HepG2 (cell line): ENCODE measurements at regions of chr2 and their contacts with region 1.

Region 1: DNA sequence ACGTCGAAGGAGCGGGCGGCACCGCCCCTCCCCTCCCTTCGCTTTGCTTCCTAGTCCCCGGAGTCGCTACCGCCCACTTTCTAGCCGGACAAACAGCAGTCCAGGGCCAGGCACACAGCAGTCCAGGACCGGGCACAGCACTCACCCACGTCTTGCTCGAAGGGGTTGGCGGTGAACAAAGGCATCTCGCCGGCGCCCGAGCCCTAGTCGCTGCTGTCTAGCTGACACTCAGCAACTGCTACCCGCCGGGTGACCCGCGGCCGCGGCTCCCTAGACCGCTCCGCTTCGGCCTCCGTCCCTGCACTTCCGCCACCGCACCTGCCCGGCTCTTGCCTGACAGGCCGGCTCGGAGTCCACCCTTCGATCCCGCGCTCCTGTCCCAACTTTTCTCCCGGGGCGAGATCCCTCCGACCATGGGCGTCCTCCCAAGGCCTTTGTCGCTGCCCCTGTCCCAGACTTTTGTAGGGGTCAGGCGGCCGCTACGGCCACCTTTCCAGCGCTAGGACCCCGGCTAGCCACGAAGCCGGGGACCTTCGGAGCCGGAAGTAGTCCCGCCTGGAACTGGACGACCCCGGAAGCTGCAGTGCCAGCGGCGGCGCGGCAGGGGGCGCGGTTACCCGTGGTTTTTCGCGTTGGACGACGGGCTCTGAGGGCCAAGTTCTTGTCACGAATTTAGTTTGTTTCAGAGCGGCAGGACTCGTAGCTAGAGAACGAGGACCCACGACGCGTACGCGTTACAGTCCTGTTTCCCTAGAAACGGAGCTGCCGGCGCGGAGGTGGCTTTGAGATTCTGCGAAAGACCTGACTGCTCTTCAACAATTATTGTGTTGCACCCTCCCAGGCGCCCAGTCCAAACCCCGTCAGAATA is at the start of gene STAM2:
- DNase-seq: peak; percentile 89
- ATAC-seq: peak; percentile 92
- H3K4me3 ChIP-seq: peak within 1 kb of the TSS; percentile 90 to 99 (median 91)
- H3K27ac ChIP-seq: peak within 1 kb of the TSS; percentile 94
- H3K4me1 ChIP-seq: peaks cover 30% of the 10 kb centered on the region
- H3K27me3 ChIP-seq: no peaks in the 10 kb centered on the region; a peak in 1 of 5 replicates
- CTCF ChIP-seq: peak; percentile 99
- EP300 ChIP-seq: peak; percentile 3 to 38; a peak in 1 of 4 replicates
- POLR2A ChIP-seq: peak; percentile 93 to 96
- RAD21 ChIP-seq: peak; percentile 98
- total RNA-seq, gene STAM2: 24.1 and 29.2 TPM in 2 replicates

Region 2: DNA sequence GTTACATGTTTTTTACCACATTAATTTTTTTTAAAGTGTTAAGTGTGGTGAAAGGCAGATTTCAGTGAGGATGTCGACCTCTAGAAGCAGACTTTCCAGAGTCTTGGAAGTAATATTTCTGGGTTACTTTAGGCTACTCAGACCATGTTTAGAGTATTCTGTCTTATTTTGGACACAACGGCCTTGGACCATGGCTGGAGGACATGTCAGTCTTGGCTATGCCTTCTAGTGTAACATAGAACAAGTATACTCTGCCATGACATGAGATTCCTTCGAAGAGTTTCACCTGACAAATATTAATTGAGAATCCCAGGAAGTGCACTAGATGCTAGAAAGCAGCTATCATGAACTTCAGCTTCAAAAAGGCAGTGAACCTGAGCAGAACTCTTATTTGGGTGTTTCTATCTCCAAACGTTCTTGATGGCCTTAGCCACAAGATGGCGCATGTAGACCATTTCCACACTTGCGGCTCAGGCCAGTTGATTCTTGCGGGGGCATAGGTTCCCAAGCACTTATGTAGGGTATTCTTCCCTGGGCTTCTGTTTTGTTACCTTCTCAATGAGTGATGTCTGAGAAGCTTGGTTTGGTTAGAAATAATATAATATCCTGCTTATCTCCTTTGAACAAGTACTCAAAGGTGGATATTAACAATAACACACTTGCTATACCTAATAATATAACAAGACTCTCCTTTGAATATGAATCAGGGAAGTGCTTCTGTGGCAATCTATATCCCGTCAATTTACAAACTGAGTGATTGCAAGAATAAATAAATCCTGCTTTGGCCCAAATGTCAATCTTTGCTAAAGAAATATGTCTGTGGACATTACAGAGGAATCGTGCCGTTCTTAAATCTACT is 138.9 kb before region 1 on chr2:
- CTCF ChIA-PET with region 1: no interaction called
- POLR2A ChIA-PET with region 1: interaction called, 4 read pairs
- in situ Hi-C with region 1: loop called (anchors 10 kb)
- intact Hi-C with region 1: loop called (anchors 1 kb)
- DNase-seq: peak; percentile 73
- ATAC-seq: peak; percentile 83
- H3K4me3 ChIP-seq: no peak overlapping the region
- H3K27ac ChIP-seq: no peak overlapping the region
- H3K4me1 ChIP-seq: no peaks in the 10 kb centered on the region
- H3K27me3 ChIP-seq: peaks cover 2 to 30% of the 10 kb centered on the region in 2 experiments; a peak in 2 of 5 replicates
- CTCF ChIP-seq: peak; percentile 93
- EP300 ChIP-seq: no peak
- POLR2A ChIP-seq: no peak
- RAD21 ChIP-seq: peak; percentile 77

Region 3: GRCh38 chr2:152155209-152155608 is 20.5 kb before region 1 on chr2:
- CTCF ChIA-PET with region 1: no interaction called
- POLR2A ChIA-PET with region 1: no interaction called
- in situ Hi-C with region 1: no loop called
- intact Hi-C with region 1: no loop called
- DNase-seq: peak; percentile 58
- ATAC-seq: peak; percentile 97
- H3K4me3 ChIP-seq: no peak overlapping the region
- H3K27ac ChIP-seq: no peak overlapping the region
- H3K4me1 ChIP-seq: peaks cover 11% of the 10 kb centered on the region
- H3K27me3 ChIP-seq: no peaks in the 10 kb centered on the region
- CTCF ChIP-seq: peak; percentile 54
- EP300 ChIP-seq: no peak
- POLR2A ChIP-seq: no peak
- RAD21 ChIP-seq: no peak

Region 4: DNA sequence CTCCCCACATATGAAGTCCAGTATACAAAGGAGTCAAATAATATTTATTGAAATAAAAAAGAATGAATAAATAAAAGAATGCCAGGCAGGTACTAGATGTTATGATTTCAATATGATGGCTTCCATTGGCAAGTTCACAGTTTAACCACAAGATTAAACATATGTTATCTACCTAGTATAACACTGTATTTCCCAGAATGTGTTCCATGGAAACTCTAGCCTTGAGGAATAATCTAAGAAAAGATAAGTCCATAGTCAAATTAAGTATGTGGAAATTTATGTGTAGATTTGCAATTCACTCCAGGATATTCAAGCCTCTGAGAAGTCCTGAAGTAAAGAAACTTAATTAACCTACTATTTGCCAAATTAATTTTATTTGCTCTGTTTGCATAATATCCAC is 88.2 kb after region 1 on chr2:
- CTCF ChIA-PET with region 1: no interaction called
- POLR2A ChIA-PET with region 1: no interaction called
- in situ Hi-C with region 1: no loop called
- intact Hi-C with region 1: no loop called
- DNase-seq: no peak
- ATAC-seq: no peak
- H3K4me3 ChIP-seq: no peak overlapping the region
- H3K27ac ChIP-seq: no peak overlapping the region
- H3K4me1 ChIP-seq: no peaks in the 10 kb centered on the region
- H3K27me3 ChIP-seq: no peaks in the 10 kb centered on the region; a peak in 1 of 5 replicates
- CTCF ChIP-seq: no peak
- EP300 ChIP-seq: no peak
- POLR2A ChIP-seq: no peak
- RAD21 ChIP-seq: no peak

Region 5: GRCh38 chr2:152367547-152368390 is 192.1 kb after region 1 on chr2:
- CTCF ChIA-PET with region 1: no interaction called
- POLR2A ChIA-PET with region 1: no interaction called
- in situ Hi-C with region 1: no loop called
- intact Hi-C with region 1: no loop called
- DNase-seq: no peak
- ATAC-seq: peak; percentile 36; the same call in 2 of the 3 replicates
- H3K4me3 ChIP-seq: no peak overlapping the region
- H3K27ac ChIP-seq: no peak overlapping the region
- H3K4me1 ChIP-seq: peaks cover 70% of the 10 kb centered on the region
- H3K27me3 ChIP-seq: no peaks in the 10 kb centered on the region
- CTCF ChIP-seq: no peak
- EP300 ChIP-seq: no peak
- POLR2A ChIP-seq: no peak
- RAD21 ChIP-seq: no peak

Region 6: GRCh38 chr2:152421521-152422370 is 246.1 kb after region 1 on chr2:
- CTCF ChIA-PET with region 1: no interaction called
- POLR2A ChIA-PET with region 1: no interaction called
- in situ Hi-C with region 1: no loop called
- intact Hi-C with region 1: loop called (anchors 10 kb)
- DNase-seq: peak; percentile 89
- ATAC-seq: peak; percentile 74
- H3K4me3 ChIP-seq: no peak overlapping the region
- H3K27ac ChIP-seq: peak overlapping the region; percentile 11
- H3K4me1 ChIP-seq: peaks cover 73% of the 10 kb centered on the region
- H3K27me3 ChIP-seq: no peaks in the 10 kb centered on the region
- CTCF ChIP-seq: no peak
- EP300 ChIP-seq: peak in 1 of 2 experiments; percentile 65; a peak in 2 of 4 replicates
- POLR2A ChIP-seq: no peak
- RAD21 ChIP-seq: no peak

Region 7: GRCh38 chr2:152470861-152471854 is 295.5 kb after region 1 on chr2:
- CTCF ChIA-PET with region 1: no interaction called
- POLR2A ChIA-PET with region 1: no interaction called
- in situ Hi-C with region 1: no loop called
- intact Hi-C with region 1: loop called (anchors 5 kb)
- DNase-seq: peak; percentile 46
- ATAC-seq: peak; percentile 29
- H3K4me3 ChIP-seq: peak overlapping the region in 2 of 3 experiments; percentile 29 to 34; a peak in 3 of 6 replicates
- H3K27ac ChIP-seq: peak overlapping the region; percentile 57
- H3K4me1 ChIP-seq: peaks cover 98% of the 10 kb centered on the region
- H3K27me3 ChIP-seq: no peaks in the 10 kb centered on the region
- CTCF ChIP-seq: no peak
- EP300 ChIP-seq: peak in 1 of 2 experiments; percentile 42; a peak in 1 of 4 replicates
- POLR2A ChIP-seq: no peak
- RAD21 ChIP-seq: no peak

Region 8: GRCh38 chr2:152635635-152636298 is 460.1 kb after region 1 on chr2:
- CTCF ChIA-PET with region 1: interaction called, 26 read pairs
- POLR2A ChIA-PET with region 1: interaction called, 3 read pairs
- in situ Hi-C with region 1: no loop called
- intact Hi-C with region 1: loop called (anchors 1 kb)
- DNase-seq: peak; percentile 76
- ATAC-seq: peak; percentile 77
- H3K4me3 ChIP-seq: no peak overlapping the region
- H3K27ac ChIP-seq: no peak overlapping the region
- H3K4me1 ChIP-seq: peaks cover 5% of the 10 kb centered on the region; the same call in 1 of the 2 replicates
- H3K27me3 ChIP-seq: no peaks in the 10 kb centered on the region
- CTCF ChIP-seq: peak; percentile 94
- EP300 ChIP-seq: no peak
- POLR2A ChIP-seq: no peak
- RAD21 ChIP-seq: peak; percentile 87

Region 9: GRCh38 chr2:152717228-152718075 is 541.8 kb after region 1 on chr2 and contains the start of gene PRPF40A:
- CTCF ChIA-PET with region 1: no interaction called
- POLR2A ChIA-PET with region 1: interaction called, 19 read pairs
- in situ Hi-C with region 1: loop called (anchors 5 kb)
- intact Hi-C with region 1: loop called (anchors 5 kb)
- DNase-seq: peak; percentile 97
- ATAC-seq: peak; percentile 82
- H3K4me3 ChIP-seq: peak within 1 kb of the TSS; percentile 75 to 96 (median 82)
- H3K27ac ChIP-seq: peak within 1 kb of the TSS; percentile 97
- H3K4me1 ChIP-seq: peaks cover 62% of the 10 kb centered on the region
- H3K27me3 ChIP-seq: no peaks in the 10 kb centered on the region; a peak in 1 of 5 replicates
- CTCF ChIP-seq: no peak
- EP300 ChIP-seq: 0 out of 4 replicates have a peak, but pooled peaks of 1 of the 2 experiments have one; percentile 17
- POLR2A ChIP-seq: peak; percentile 83 to 93
- RAD21 ChIP-seq: 0 out of 2 replicates have a peak, but pooled peaks have one; percentile 19
- total RNA-seq, gene PRPF40A: 207 and 298 TPM in 2 replicates